Naive thymus-derived CD4-positive, alpha-beta T cell (primary cell): ENCODE measurements at regions of chrX and their contacts with region 1.

Region 1: DNA sequence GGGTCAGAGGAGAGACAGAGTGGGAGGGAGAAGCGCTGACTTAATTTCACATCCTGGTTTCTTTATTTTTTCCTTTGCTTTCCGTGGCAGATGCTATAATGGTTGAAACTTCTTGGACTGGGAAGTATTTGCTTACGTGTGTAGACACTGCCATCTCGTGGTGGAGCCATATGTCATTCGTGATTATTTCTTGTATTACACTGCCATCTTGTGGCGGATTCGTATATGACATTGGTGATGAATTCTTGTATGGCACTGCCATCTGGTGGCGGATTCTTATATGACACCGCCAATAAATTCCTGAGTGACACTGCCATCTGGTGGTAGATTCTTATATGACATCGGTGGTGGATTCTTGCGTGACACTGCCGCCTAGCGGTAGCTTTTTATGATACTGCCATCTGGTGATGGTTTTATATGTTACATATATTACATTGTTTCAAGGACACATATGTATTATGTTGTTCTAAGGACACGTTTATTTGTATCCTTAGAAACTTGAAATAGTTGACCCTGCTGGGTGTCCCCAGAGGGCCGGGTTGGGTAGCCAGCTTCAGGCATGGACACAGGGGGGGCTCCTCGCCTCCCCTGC is 37.3 kb upstream of the CLCN4 start:
- DNase-seq: peak; percentile 51 to 90 (median 77)
- ATAC-seq: peak; percentile 97
- H3K4me3 ChIP-seq: no peak overlapping the region
- H3K4me3 Mint-ChIP-seq: peak overlapping the region in 2 of 10 donors; percentile 44 to 52
- H3K27ac ChIP-seq: no peak overlapping the region
- H3K27ac Mint-ChIP-seq: peak overlapping the region; percentile 3 to 86 (median 54)
- H3K4me1 ChIP-seq: no peaks in the 10 kb centered on the region
- H3K4me1 Mint-ChIP-seq: peaks cover 6 to 25% (median 12%) of the 10 kb centered on the region in 7 donors
- H3K27me3 ChIP-seq: no peaks in the 10 kb centered on the region
- H3K27me3 Mint-ChIP-seq: no peaks in the 10 kb centered on the region

Region 2: GRCh38 chrX:8748855-8749254 is 1370.6 kb before region 1 on chrX:
- CTCF ChIA-PET with region 1: no interaction called
- POLR2A ChIA-PET with region 1: no interaction called
- intact Hi-C with region 1: loop called in 1 of 2 experiments (anchors 2 kb)
- DNase-seq: peak in 4 of 9 donors; percentile 14 to 30 (median 24)
- ATAC-seq: no peak
- H3K4me3 ChIP-seq: no peak overlapping the region
- H3K4me3 Mint-ChIP-seq: no peak overlapping the region
- H3K27ac ChIP-seq: no peak overlapping the region
- H3K27ac Mint-ChIP-seq: no peak overlapping the region
- H3K4me1 ChIP-seq: no peaks in the 10 kb centered on the region
- H3K4me1 Mint-ChIP-seq: peaks cover 0 to 6% (median 0%) of the 10 kb centered on the region in 7 donors
- H3K27me3 ChIP-seq: no peaks in the 10 kb centered on the region
- H3K27me3 Mint-ChIP-seq: peaks cover 4 to 12% (median 6%) of the 10 kb centered on the region in 5 donors

Region 3: DNA sequence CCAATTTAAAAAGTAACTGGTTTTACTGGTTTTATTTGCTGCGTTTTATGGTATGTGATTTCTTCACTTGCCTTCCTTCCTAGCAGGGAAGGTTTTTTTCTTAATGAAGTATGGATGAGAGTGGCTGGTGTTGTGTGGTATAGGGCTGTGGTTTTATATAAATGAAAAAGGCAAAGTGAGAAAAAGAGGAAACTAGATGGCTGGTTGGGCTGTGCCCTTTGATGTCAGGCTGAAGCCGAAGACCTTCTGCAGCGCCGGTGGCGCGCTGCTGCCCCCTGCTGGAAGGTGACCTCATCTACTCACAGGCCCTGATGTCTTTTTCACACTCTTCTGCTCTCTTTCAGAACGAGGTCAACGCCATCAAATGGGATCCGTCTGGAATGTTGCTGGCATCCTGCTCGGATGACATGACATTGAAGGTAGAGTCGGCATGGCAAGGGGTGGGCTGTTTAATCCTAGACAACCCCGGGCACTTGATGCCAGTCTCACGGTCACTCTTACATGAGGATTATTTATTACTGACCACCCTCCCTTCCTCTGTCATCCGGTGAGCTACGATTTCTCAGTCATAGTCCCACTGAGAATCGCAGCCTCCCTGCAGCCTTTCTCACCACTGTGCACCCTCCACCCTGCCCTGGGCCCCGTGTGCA is 410.5 kb before region 1 on chrX:
- CTCF ChIA-PET with region 1: no interaction called
- POLR2A ChIA-PET with region 1: no interaction called
- intact Hi-C with region 1: loop called in 1 of 2 experiments (anchors 2 kb)
- DNase-seq: peak; percentile 62 to 84 (median 76)
- ATAC-seq: peak; percentile 95
- H3K4me3 ChIP-seq: no peak overlapping the region
- H3K4me3 Mint-ChIP-seq: peak overlapping the region in 4 of 10 donors; percentile 1 to 42 (median 16)
- H3K27ac ChIP-seq: no peak overlapping the region
- H3K27ac Mint-ChIP-seq: peak overlapping the region in 7 of 9 donors; percentile 7 to 84 (median 49)
- H3K4me1 ChIP-seq: peaks cover 0 to 5% of the 10 kb centered on the region in 2 donors
- H3K4me1 Mint-ChIP-seq: peaks cover 0 to 16% (median 10%) of the 10 kb centered on the region in 7 donors
- H3K27me3 ChIP-seq: no peaks in the 10 kb centered on the region
- H3K27me3 Mint-ChIP-seq: no peaks in the 10 kb centered on the region

Region 4: DNA sequence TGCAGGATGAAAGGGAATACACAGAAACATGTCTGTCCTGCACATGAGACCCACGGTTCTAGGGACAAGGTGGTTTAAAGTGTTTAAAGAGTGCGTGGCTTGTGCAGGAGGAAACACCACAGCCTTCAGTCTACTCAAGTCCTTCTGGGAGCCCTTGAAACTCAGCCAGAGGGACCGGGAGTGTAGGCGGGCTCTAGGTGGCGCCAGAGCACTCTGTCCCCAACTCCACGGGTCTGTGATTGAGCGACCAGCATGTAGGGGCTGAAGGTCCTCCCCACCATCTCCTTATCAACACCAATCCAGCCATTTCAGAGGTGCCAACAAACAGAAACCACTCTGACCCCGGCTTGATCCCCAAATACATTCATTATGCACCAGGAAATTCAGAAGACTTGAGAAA is 234.3 kb before region 1 on chrX:
- CTCF ChIA-PET with region 1: interaction called, 3 read pairs
- POLR2A ChIA-PET with region 1: no interaction called
- intact Hi-C with region 1: loop called in 1 of 2 experiments (anchors 1 kb)
- DNase-seq: peak in 8 of 9 donors; percentile 8 to 42 (median 26)
- ATAC-seq: peak; percentile 79
- H3K4me3 ChIP-seq: no peak overlapping the region
- H3K4me3 Mint-ChIP-seq: no peak overlapping the region
- H3K27ac ChIP-seq: no peak overlapping the region
- H3K27ac Mint-ChIP-seq: no peak overlapping the region
- H3K4me1 ChIP-seq: no peaks in the 10 kb centered on the region
- H3K4me1 Mint-ChIP-seq: peaks cover 0 to 13% (median 0%) of the 10 kb centered on the region in 7 donors
- H3K27me3 ChIP-seq: no peaks in the 10 kb centered on the region
- H3K27me3 Mint-ChIP-seq: peaks cover 0 to 6% (median 0%) of the 10 kb centered on the region in 5 donors

Region 5: GRCh38 chrX:9995855-9996339 is 123.6 kb before region 1 on chrX:
- CTCF ChIA-PET with region 1: interaction called, 51 read pairs
- POLR2A ChIA-PET with region 1: interaction called, 3 read pairs
- intact Hi-C with region 1: loop called (anchors 1 kb)
- DNase-seq: peak; percentile 55 to 79 (median 67)
- ATAC-seq: peak; percentile 91
- H3K4me3 ChIP-seq: no peak overlapping the region
- H3K4me3 Mint-ChIP-seq: no peak overlapping the region
- H3K27ac ChIP-seq: no peak overlapping the region
- H3K27ac Mint-ChIP-seq: no peak overlapping the region
- H3K4me1 ChIP-seq: no peaks in the 10 kb centered on the region
- H3K4me1 Mint-ChIP-seq: peaks cover 0 to 17% (median 0%) of the 10 kb centered on the region in 7 donors
- H3K27me3 ChIP-seq: no peaks in the 10 kb centered on the region
- H3K27me3 Mint-ChIP-seq: no peaks in the 10 kb centered on the region

Region 6: DNA sequence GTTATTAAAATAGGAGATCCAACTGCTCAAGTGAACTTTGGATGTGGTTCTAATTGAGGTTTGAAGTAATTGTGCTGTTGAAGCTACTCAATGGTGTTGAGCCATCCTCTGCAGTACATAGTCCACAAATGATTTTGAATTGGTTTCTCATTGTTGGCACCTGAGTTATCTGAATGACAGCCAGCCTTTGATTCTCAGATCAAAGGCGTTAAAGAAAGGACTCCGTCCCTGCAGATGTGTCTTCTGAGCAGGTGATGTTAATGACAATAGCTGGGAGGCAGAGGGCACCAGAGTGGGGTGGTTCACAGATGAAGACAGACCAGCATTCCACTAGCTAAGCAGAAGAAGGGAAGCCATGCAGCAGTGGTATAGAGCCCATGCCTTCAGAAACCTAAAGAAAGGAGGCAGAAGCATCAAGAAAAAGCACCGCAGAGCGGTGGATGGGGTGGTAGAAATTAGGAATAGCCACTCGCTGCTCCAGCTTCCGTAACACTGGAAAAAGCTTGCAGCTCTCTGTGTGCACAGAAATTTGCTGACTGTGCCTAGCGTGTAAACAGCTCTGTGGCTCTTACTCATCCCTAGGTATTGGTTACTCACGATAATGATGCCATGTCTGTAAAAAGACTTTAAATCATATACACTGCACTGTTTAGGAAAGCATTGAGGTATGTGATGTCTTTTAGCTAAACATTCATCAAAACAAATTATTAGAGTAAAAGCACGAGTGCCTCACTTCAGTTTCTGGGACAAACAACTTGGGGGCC is 41.9 kb before region 1 on chrX:
- CTCF ChIA-PET with region 1: interaction called, 29 read pairs
- POLR2A ChIA-PET with region 1: interaction called, 4 read pairs
- intact Hi-C with region 1: loop called (anchors 1 to 2 kb)
- DNase-seq: peak in 4 of 9 donors; percentile 23 to 47 (median 28)
- ATAC-seq: no peak
- H3K4me3 ChIP-seq: no peak overlapping the region
- H3K4me3 Mint-ChIP-seq: no peak overlapping the region
- H3K27ac ChIP-seq: no peak overlapping the region
- H3K27ac Mint-ChIP-seq: peak overlapping the region in 3 of 9 donors; percentile 14 to 80 (median 66)
- H3K4me1 ChIP-seq: peaks cover 4 to 5% of the 10 kb centered on the region in 2 donors
- H3K4me1 Mint-ChIP-seq: peaks cover 0 to 18% (median 11%) of the 10 kb centered on the region in 7 donors
- H3K27me3 ChIP-seq: no peaks in the 10 kb centered on the region
- H3K27me3 Mint-ChIP-seq: no peaks in the 10 kb centered on the region

Region 7: DNA sequence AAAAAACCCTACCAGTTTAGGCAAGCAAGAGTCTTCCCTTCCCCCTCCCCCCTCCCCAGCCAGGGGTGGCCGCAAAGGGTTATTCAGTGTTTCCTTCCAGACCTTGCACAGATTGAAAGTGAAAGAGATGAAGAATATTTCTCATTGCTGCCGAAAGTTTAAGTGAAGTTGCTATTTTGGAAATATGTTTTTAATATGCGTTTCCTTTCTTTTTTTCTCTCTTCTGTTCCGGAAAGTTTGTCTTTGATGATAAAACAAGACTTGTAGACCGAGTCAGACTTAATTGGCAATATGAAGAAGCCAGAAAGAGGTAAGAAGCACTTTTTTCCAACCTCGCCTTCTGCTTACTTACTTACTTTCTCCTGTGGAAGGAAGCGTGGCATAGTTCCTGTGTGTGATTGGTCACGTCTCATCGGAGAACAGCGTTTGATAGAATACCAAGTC is 21.2 kb before region 1 on chrX:
- CTCF ChIA-PET with region 1: interaction called, 5 read pairs
- POLR2A ChIA-PET with region 1: interaction called, 8 read pairs
- intact Hi-C with region 1: loop called (anchors 1 kb)
- DNase-seq: peak in 8 of 9 donors; percentile 30 to 78 (median 64)
- ATAC-seq: peak; percentile 87
- H3K4me3 ChIP-seq: peak overlapping the region; percentile 72
- H3K4me3 Mint-ChIP-seq: peak overlapping the region; percentile 83 to 94 (median 88)
- H3K27ac ChIP-seq: peak overlapping the region; percentile 73
- H3K27ac Mint-ChIP-seq: peak overlapping the region; percentile 86 to 98 (median 92)
- H3K4me1 ChIP-seq: peaks cover 5 to 9% of the 10 kb centered on the region in 2 donors
- H3K4me1 Mint-ChIP-seq: peaks cover 13 to 58% (median 51%) of the 10 kb centered on the region in 7 donors
- H3K27me3 ChIP-seq: no peaks in the 10 kb centered on the region
- H3K27me3 Mint-ChIP-seq: no peaks in the 10 kb centered on the region

Region 8: DNA sequence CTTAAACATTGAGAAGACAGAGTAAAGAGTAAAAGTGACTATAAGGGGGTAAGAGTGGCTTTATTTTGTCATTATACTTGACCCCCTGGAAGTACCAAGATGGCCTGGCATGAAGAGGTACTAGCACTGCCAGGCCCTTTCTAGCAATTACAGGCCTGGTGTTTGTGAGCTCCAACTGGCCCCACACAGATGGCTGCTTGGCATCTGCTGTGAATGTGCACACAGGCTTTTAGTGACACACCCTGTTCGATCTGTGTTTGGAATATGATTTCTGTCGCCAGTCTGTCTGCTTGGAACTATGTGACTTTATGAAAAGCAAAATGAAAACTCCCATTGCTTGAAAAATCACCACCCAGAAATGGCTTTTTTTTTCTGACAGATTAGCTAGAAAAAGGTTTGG is 160.6 kb after region 1 on chrX:
- CTCF ChIA-PET with region 1: no interaction called
- POLR2A ChIA-PET with region 1: no interaction called
- intact Hi-C with region 1: no loop called
- DNase-seq: no peak
- ATAC-seq: no peak
- H3K4me3 ChIP-seq: no peak overlapping the region
- H3K4me3 Mint-ChIP-seq: no peak overlapping the region
- H3K27ac ChIP-seq: no peak overlapping the region
- H3K27ac Mint-ChIP-seq: no peak overlapping the region
- H3K4me1 ChIP-seq: no peaks in the 10 kb centered on the region
- H3K4me1 Mint-ChIP-seq: peaks cover 0 to 2% (median 0%) of the 10 kb centered on the region in 7 donors
- H3K27me3 ChIP-seq: no peaks in the 10 kb centered on the region
- H3K27me3 Mint-ChIP-seq: no peaks in the 10 kb centered on the region